ENCODE measurements at regions of chr1 and their contacts with region 1.

Region 1: GRCh38 chr1:230167419-230167852 is 100.4 kb downstream of the GALNT2 start:
- DNase-seq: peak; percentile 59
- ATAC-seq: peak; percentile 91
- H3K4me3 ChIP-seq: no peak overlapping the region
- H3K27ac ChIP-seq: no peak overlapping the region
- H3K4me1 ChIP-seq: no peaks in the 10 kb centered on the region
- H3K27me3 ChIP-seq: no peaks in the 10 kb centered on the region
- CTCF ChIP-seq: peak; percentile 86 to 89 (median 87)
- POLR2A ChIP-seq: no peak
- RAD21 ChIP-seq: peak; percentile 85

Region 2: GRCh38 chr1:229661022-229661877 is 506.2 kb before region 1 on chr1:
- CTCF ChIA-PET with region 1: no interaction called
- POLR2A ChIA-PET with region 1: no interaction called
- RAD21 ChIA-PET with region 1: no interaction called
- intact Hi-C with region 1: loop called (anchors 2 kb)
- DNase-seq: peak; percentile 32
- ATAC-seq: peak; percentile 96
- H3K4me3 ChIP-seq: no peak overlapping the region
- H3K27ac ChIP-seq: no peak overlapping the region; the same call in 1 of the 2 replicates
- H3K4me1 ChIP-seq: no peaks in the 10 kb centered on the region
- H3K27me3 ChIP-seq: no peaks in the 10 kb centered on the region
- CTCF ChIP-seq: peak; percentile 70 to 94 (median 89)
- POLR2A ChIP-seq: no peak
- RAD21 ChIP-seq: peak; percentile 84

Region 3: DNA sequence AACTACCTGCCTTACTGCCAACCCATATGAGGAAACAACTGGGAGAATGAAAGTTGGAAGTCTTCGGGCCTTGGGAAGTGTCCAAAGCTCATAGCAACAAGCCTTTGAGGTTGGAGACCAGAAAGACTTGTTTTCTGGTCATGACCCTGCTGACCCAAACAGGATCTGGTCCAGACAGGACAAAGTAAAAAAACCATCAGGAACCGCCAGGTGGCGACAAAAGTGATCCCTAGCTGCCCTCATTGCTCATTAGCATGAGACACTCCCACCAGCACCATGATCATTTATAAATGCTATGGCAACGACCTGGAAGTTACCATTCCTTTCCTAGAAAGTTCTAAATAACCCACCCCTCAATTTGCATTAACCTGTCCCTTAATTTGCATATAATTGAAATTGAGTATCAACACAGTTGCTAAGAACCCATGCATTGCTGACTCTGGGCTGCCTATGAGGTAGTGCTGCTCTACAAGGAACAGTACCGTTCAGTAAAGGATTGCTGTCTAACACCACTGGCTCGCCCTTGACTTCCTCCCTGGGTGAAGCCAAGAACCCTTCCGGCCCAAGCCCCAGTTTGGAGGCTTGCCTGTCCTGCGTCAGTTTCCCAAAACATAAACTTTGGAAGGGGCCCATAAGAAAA is 452.4 kb before region 1 on chr1:
- CTCF ChIA-PET with region 1: no interaction called
- POLR2A ChIA-PET with region 1: no interaction called
- RAD21 ChIA-PET with region 1: no interaction called
- intact Hi-C with region 1: loop called (anchors 5 kb)
- DNase-seq: peak; percentile 37
- ATAC-seq: peak; percentile 96
- H3K4me3 ChIP-seq: no peak overlapping the region
- H3K27ac ChIP-seq: no peak overlapping the region
- H3K4me1 ChIP-seq: no peaks in the 10 kb centered on the region
- H3K27me3 ChIP-seq: no peaks in the 10 kb centered on the region
- CTCF ChIP-seq: peak; percentile 45 to 76 (median 63); a peak in 5 of 6 replicates
- POLR2A ChIP-seq: no peak
- RAD21 ChIP-seq: peak; percentile 61

Region 4: DNA sequence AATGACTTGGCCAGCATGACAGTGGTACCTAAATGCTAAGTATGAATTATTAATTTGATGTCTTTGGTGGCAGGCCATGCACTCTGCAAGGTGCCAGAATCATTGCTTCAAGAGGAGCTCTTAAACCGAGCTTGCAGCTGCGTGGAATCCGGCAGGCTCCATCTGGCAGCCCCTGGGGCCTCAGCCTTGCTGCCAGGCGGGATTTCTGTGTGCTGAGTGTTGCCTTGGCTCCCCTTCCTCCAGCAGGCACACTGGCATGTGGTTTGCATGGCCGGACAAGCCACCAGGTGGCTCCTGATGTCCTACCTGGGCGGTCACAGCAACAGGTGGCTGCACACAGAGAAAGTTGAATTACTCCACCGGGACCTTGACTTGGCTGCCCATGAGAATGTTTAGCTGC is 386.0 kb before region 1 on chr1:
- CTCF ChIA-PET with region 1: no interaction called
- POLR2A ChIA-PET with region 1: no interaction called
- RAD21 ChIA-PET with region 1: no interaction called
- intact Hi-C with region 1: loop called (anchors 5 kb)
- DNase-seq: peak; percentile 7
- ATAC-seq: peak; percentile 69; the same call in 1 of the 2 replicates
- H3K4me3 ChIP-seq: no peak overlapping the region
- H3K27ac ChIP-seq: no peak overlapping the region
- H3K4me1 ChIP-seq: no peaks in the 10 kb centered on the region
- H3K27me3 ChIP-seq: peaks cover 7% of the 10 kb centered on the region; the same call in 1 of the 2 replicates
- CTCF ChIP-seq: peak; percentile 35 to 39 (median 37); a peak in 5 of 6 replicates
- POLR2A ChIP-seq: no peak
- RAD21 ChIP-seq: peak; percentile 65

Region 5: GRCh38 chr1:229848752-229849677 is 318.4 kb before region 1 on chr1:
- CTCF ChIA-PET with region 1: no interaction called
- POLR2A ChIA-PET with region 1: no interaction called
- RAD21 ChIA-PET with region 1: no interaction called
- intact Hi-C with region 1: loop called (anchors 10 kb)
- DNase-seq: peak; percentile 39
- ATAC-seq: peak; percentile 88
- H3K4me3 ChIP-seq: no peak overlapping the region
- H3K27ac ChIP-seq: no peak overlapping the region
- H3K4me1 ChIP-seq: no peaks in the 10 kb centered on the region
- H3K27me3 ChIP-seq: no peaks in the 10 kb centered on the region; the same call in 1 of the 2 replicates
- CTCF ChIP-seq: peak; percentile 28 to 83 (median 78); a peak in 5 of 6 replicates
- POLR2A ChIP-seq: no peak
- RAD21 ChIP-seq: peak; percentile 54

Region 6: DNA sequence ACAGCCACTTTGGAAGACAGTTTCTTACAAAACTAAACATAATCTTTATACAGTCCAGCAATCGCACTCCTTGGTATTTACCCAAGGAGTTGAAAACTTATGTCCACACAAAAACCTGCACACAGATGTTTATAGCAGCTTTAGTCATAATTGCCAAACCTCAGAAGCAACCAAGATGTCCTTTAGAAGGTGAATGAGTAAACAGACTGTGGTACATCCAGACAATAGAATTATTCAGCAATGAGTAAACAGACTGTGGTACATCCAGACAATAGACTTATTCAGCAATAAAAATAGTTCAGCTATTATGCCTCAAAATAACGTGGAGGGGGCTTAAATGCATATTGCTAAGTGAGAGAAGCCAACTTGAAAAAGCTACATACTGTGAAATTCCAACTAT is 187.4 kb before region 1 on chr1:
- CTCF ChIA-PET with region 1: no interaction called
- POLR2A ChIA-PET with region 1: no interaction called
- RAD21 ChIA-PET with region 1: no interaction called
- intact Hi-C with region 1: no loop called
- DNase-seq: no peak
- ATAC-seq: peak; percentile 42; the same call in 1 of the 2 replicates
- H3K4me3 ChIP-seq: no peak overlapping the region
- H3K27ac ChIP-seq: no peak overlapping the region
- H3K4me1 ChIP-seq: peaks cover 0 to 6% of the 10 kb centered on the region in 2 experiments; a peak in 1 of 4 replicates
- H3K27me3 ChIP-seq: peaks cover 15% of the 10 kb centered on the region
- CTCF ChIP-seq: no peak
- POLR2A ChIP-seq: no peak
- RAD21 ChIP-seq: no peak